Right cardiac atrium (tissue), 5 donors: ENCODE measurements at regions of chr3 and their contacts with region 1.

Region 1: GRCh38 chr3:54374214-54374855 is 252.0 kb downstream of the CACNA2D3 start:
- DNase-seq: no peak
- ATAC-seq: no peak
- H3K4me3 ChIP-seq: no peak overlapping the region
- H3K27ac ChIP-seq: no peak overlapping the region
- H3K4me1 ChIP-seq: peaks cover 15% of the 10 kb centered on the region
- H3K27me3 ChIP-seq: no peaks in the 10 kb centered on the region

Region 2: GRCh38 chr3:53941956-53942355 is 432.4 kb before region 1 on chr3:
- intact Hi-C with region 1: loop called in 1 of 4 experiments (anchors 10 kb)
- DNase-seq: no peak
- ATAC-seq: peak in 1 of 2 donors; percentile 53
- H3K4me3 ChIP-seq: no peak overlapping the region
- H3K27ac ChIP-seq: no peak overlapping the region
- H3K4me1 ChIP-seq: no peaks in the 10 kb centered on the region
- H3K27me3 ChIP-seq: no peaks in the 10 kb centered on the region